Activated naive CD4-positive, alpha-beta T cell treated with anti-CD3 and anti-CD28 coated beads for 36 hours (primary cell): ENCODE measurements at regions of chr5 and their contacts with region 1.

Region 1: GRCh38 chr5:177982072-177982727 is 13.8 kb downstream of the PROP1 start:
- DNase-seq: peak; percentile 63
- H3K4me3 Mint-ChIP-seq: no peak overlapping the region
- H3K27ac Mint-ChIP-seq: no peak overlapping the region
- H3K4me1 Mint-ChIP-seq: peaks cover 7% of the 10 kb centered on the region
- H3K27me3 Mint-ChIP-seq: peaks cover 50% of the 10 kb centered on the region

Region 2: DNA sequence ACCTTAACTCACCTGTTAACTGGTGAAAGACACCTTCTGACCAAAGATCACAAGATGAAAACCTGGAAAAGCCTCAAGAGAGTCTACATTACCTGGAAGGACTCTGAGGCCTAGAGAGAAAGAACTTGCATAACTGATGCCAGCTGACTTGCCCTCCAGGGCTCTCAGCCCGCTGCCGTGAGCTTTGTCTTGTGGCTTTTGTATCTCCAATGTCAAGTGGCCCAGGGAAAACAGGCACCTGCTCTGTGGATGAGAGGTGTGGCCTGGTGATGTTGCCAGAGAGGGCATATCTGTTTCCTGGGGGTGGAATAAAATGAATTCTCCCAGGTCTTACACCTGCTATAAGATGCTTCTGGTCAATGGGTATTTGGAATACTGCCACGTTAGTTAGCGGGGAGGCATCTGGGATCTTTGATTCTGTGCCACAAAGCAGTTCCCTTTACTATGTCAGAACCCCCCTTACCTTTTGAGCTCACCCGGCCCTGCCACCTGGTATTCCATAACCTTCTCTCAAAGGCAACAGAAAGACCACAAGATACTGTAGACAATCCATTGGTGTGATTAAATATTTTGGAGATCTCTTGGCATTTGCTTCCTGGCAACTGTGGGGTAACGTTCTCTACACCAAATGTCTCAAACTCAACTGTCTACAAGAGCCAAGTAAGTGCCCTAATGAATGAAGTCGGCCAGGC is 76.3 kb after region 1 on chr5:
- CTCF ChIA-PET with region 1: interaction called, 7 read pairs
- intact Hi-C with region 1: loop called (anchors 1 kb)
- DNase-seq: no peak
- H3K4me3 Mint-ChIP-seq: no peak overlapping the region
- H3K27ac Mint-ChIP-seq: no peak overlapping the region
- H3K4me1 Mint-ChIP-seq: peaks cover 4% of the 10 kb centered on the region
- H3K27me3 Mint-ChIP-seq: no peaks in the 10 kb centered on the region

Region 3: GRCh38 chr5:178163772-178164735 is 181.9 kb after region 1 on chr5:
- CTCF ChIA-PET with region 1: no interaction called
- intact Hi-C with region 1: loop called (anchors 10 kb)
- DNase-seq: peak; percentile 95
- H3K4me3 Mint-ChIP-seq: peak overlapping the region; percentile 38
- H3K27ac Mint-ChIP-seq: no peak overlapping the region
- H3K4me1 Mint-ChIP-seq: peaks cover 2% of the 10 kb centered on the region
- H3K27me3 Mint-ChIP-seq: peaks cover 11% of the 10 kb centered on the region

Region 4: DNA sequence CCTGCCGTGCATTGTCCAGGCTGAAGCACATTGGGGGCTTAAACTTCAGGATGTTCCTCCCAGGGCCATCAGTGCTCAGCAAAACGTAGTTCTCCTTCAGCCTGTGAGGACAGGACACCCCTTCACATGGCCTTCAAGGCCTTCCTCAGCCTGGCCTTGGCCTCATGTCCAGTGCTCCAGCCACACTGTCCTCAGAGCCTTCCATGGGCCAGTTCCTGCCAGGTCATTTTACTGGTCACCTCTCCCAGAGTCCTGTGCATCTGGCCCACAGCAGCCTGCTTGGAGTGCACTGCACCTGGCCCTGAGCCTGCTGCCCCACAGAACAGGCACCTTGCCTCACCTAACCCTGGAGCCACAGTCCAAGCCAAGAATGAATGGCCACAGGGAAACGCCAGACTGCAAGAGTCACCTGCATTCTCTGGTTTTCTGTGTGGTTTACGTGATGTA is 230.8 kb after region 1 on chr5:
- CTCF ChIA-PET with region 1: no interaction called
- intact Hi-C with region 1: no loop called
- DNase-seq: no peak
- H3K4me3 Mint-ChIP-seq: no peak overlapping the region
- H3K27ac Mint-ChIP-seq: peak overlapping the region; percentile 41
- H3K4me1 Mint-ChIP-seq: peaks cover 21% of the 10 kb centered on the region
- H3K27me3 Mint-ChIP-seq: no peaks in the 10 kb centered on the region